Activated T-helper 2 cell treated with anti-CD3 and anti-CD28 coated beads, Interferon-gamma antibody, Interleukin-2, Interleukin-4, amounts not matched to agents 10 μg/mL and 5 μg/mL and 100 μg/mL, durations not matched to agents 14 hours and 24 hours and 36 hours (primary cell): ENCODE measurements at regions of chrX and their contacts with region 1.

Region 1: DNA sequence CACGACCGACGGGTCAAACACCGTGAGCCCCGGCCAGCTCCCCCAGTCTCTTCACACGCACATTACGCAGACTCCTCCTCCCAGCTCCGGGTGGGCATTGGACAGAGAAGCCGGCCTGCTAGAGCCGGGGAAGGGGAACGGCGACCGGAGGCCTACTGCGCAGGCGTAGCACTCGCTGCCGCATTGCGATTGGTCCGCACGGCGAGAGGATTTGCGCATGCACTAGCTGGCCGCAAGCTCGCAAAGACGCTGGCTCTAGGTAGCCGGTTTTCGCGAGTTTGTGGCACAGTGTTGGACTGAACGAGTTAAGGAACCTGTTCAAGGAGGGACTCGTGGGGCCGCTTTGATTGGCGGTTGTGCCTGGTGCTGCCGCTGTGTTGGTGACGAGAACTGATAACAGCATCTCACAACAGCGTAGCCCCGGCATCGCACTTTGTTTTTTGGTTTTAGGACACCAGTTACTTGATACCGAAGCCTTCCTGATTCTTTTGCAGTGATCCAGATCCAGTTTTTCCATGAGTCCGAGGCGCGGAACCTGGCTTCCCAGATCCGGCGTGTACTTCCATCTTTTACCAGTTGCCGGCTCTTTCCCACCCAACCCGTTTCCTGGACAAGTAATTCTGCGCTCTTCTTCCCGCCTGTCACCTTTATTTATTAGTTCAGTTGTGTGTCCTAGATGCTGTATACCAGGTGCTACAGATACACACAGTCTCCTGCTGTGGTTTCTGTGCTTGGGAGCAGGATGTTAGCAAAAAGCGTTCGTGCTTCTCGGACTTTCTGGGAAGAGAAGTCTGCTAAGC is at the start of gene AIFM1:
- DNase-seq: peak; percentile 86
- H3K4me3 Mint-ChIP-seq: peak within 1 kb of the TSS; percentile 98
- H3K27ac Mint-ChIP-seq: peak within 1 kb of the TSS; percentile 97
- H3K4me1 Mint-ChIP-seq: peaks cover 31% of the 10 kb centered on the region
- H3K27me3 Mint-ChIP-seq: no peaks in the 10 kb centered on the region
- total RNA-seq, gene AIFM1: 48.7 and 51.1 TPM in 2 replicates

Region 2: DNA sequence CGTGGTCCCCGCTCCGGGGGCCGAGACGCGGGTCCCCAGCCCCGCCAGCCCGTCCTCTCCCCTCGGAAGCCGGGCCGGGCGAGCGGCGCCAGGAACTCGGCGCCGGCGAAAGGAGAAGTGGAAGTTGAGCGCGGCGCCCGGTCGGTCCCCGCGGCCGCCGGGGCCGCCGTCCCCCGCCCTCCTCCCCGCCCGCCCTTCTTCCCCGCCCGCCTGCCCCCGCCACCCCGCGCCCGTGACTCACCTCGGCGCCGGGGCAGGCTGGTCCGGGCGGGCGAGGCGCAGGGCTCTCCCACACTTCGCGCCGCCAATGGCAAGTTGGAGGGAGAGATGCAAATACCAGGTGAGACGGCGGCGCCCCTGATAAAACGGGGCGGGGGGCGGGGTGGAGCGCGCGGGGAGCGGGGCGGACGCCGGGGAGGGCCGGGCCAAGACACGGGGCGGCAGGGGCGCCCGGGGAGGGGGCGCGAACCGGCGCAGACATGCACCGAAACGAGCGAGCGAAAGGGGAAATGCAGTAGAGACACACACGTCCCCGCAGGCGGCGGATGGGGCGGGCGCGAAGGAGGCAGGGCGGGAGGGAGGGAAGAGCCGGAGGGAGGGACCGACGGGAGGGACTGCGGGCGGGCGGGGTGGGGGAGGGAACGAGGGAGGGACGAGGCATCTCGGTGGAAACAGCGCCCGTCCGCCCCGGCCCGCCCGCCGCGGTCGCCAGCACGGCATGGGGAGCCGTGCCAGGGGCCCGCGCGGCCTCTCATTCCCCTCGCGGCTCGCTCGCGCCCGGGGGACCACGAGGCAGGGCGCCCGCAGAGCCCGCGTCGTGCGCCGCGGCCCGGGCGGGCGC is 55.3 kb before region 1 on chrX and contains the start of gene ELF4:
- intact Hi-C with region 1: loop called (anchors 2 kb)
- DNase-seq: peak; percentile 29
- H3K4me3 Mint-ChIP-seq: peak within 1 kb of the TSS; percentile 94
- H3K27ac Mint-ChIP-seq: peak within 1 kb of the TSS; percentile 84
- H3K4me1 Mint-ChIP-seq: peaks cover 34% of the 10 kb centered on the region
- H3K27me3 Mint-ChIP-seq: no peaks in the 10 kb centered on the region
- total RNA-seq, gene ELF4: 31.8 and 33.6 TPM in 2 replicates

Region 3: DNA sequence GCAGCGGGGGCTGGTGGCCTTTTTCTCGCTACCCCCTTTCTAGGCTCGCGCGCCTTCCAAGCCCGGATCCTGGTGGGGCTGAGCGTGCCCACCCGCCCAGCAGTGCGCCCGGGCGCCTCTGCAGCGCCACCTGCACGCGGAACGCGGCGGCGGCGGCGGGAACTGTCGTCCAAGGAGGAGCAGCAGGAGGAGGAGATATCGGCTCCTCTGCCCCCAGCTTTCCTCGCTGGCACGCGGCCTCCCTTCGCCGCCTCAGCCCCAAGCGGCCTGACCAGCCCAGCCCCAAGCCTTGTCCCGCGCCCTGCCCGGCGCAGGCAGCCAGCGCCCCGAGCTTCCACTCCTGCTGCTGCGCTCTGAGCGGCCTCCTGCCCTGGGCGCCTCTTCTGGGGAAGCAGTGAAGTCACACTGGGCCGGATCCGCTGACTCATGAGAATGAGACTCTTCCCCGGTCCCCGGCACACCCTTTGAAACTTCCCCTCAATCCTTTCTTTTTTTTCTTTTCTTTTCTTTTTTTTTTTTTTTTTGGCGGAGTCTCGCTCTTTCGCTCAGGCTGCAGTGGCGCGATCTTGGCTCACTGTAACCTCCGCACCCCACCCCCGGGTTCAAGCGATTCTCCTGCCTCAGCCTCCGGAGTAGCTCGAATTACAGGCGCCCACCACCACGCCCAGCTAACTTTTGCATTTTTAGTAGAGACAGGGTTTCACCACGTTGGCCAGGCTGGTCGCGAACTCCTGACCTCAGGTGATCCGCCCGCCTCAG is 45.0 kb before region 1 on chrX:
- intact Hi-C with region 1: loop called (anchors 5 kb)
- DNase-seq: peak; percentile 54
- H3K4me3 Mint-ChIP-seq: peak overlapping the region; percentile 62
- H3K27ac Mint-ChIP-seq: peak overlapping the region; percentile 67
- H3K4me1 Mint-ChIP-seq: peaks cover 20% of the 10 kb centered on the region
- H3K27me3 Mint-ChIP-seq: no peaks in the 10 kb centered on the region

Region 4: GRCh38 chrX:130144509-130144908 is 21.4 kb before region 1 on chrX:
- intact Hi-C with region 1: no loop called
- DNase-seq: no peak
- H3K4me3 Mint-ChIP-seq: no peak overlapping the region
- H3K27ac Mint-ChIP-seq: no peak overlapping the region
- H3K4me1 Mint-ChIP-seq: peaks cover 3% of the 10 kb centered on the region
- H3K27me3 Mint-ChIP-seq: no peaks in the 10 kb centered on the region

Region 5: DNA sequence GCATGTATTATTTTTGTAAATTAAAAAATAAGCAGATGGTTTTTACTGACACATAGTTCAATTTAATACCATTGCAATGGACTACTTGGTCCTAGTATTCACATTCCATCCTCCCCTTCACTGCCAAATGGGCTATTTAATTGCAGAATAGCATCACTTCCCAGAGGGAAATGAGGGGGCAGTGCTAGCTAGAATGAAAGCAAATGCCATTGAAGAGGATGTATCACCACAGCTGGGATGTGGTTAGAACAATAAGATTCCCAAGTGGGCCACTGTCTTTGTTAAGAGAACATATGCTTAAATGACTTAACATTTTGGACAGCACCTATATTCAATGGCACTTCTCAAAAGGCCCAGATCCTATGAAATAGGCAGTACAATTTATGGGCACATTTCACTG is 460.6 kb after region 1 on chrX:
- intact Hi-C with region 1: no loop called
- DNase-seq: no peak
- H3K4me3 Mint-ChIP-seq: no peak overlapping the region
- H3K27ac Mint-ChIP-seq: no peak overlapping the region
- H3K4me1 Mint-ChIP-seq: no peaks in the 10 kb centered on the region
- H3K27me3 Mint-ChIP-seq: no peaks in the 10 kb centered on the region